Activated CD4-positive, alpha-beta memory T cell treated with anti-CD3 and anti-CD28 coated beads for 36 hours (primary cell): ENCODE measurements at regions of chr14 and their contacts with region 1.

Region 1: DNA sequence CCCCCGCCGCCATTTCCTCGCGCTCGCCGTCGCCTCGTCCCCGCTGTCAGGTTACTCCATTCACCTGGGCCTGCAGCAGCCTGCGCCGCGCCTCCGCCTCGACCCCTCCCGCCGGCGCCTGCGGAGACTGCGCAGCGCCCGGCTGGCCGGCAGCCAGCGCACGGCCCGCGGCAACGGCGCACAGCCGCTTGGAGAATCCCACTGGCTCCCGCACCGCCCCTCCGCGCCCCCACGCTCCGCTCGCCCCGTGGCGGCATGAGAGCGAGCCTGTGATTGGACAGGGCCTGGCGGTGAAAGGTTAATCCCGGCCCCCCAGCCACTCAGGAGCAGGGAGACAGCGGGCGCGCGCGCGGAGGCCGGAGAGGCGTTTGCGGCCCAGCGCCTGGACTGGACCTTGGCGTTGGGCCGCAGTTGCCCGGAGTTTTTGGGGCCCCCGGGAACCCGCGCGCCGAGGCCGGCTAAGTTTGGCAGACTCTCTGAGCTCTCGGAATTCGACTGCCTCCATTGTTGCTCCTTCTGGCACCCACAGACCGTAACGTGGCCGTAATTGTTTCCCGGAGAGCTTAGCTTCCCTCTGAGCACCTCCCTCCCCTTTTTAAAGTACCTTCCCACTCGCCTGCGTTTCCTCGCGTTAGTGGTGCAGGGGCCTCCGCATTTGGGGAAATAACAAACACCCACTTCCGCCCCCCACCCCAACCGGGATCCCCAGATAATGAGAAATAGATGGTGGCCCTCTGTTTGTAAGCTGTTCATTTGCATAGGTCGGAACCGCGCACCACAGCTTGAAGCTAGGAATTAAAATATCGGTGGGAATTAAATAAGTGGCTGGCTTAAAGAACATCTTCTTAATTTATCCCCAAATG is at the start of gene DICER1:
- DNase-seq: peak; percentile 95
- H3K4me3 Mint-ChIP-seq: peak within 1 kb of the TSS; percentile 96
- H3K27ac Mint-ChIP-seq: peak within 1 kb of the TSS; percentile 97
- H3K4me1 Mint-ChIP-seq: peaks cover 35% of the 10 kb centered on the region
- H3K27me3 Mint-ChIP-seq: no peaks in the 10 kb centered on the region
- total RNA-seq, gene DICER1: 39.9 to 40.9 TPM

Region 2: GRCh38 chr14:94282991-94283723 is 874.4 kb before region 1 on chr14:
- CTCF ChIA-PET with region 1: no interaction called
- POLR2A ChIA-PET with region 1: no interaction called
- intact Hi-C with region 1: no loop called
- DNase-seq: no peak
- H3K4me3 Mint-ChIP-seq: no peak overlapping the region
- H3K27ac Mint-ChIP-seq: no peak overlapping the region
- H3K4me1 Mint-ChIP-seq: peaks cover 12% of the 10 kb centered on the region
- H3K27me3 Mint-ChIP-seq: peaks cover 1% of the 10 kb centered on the region

Region 3: DNA sequence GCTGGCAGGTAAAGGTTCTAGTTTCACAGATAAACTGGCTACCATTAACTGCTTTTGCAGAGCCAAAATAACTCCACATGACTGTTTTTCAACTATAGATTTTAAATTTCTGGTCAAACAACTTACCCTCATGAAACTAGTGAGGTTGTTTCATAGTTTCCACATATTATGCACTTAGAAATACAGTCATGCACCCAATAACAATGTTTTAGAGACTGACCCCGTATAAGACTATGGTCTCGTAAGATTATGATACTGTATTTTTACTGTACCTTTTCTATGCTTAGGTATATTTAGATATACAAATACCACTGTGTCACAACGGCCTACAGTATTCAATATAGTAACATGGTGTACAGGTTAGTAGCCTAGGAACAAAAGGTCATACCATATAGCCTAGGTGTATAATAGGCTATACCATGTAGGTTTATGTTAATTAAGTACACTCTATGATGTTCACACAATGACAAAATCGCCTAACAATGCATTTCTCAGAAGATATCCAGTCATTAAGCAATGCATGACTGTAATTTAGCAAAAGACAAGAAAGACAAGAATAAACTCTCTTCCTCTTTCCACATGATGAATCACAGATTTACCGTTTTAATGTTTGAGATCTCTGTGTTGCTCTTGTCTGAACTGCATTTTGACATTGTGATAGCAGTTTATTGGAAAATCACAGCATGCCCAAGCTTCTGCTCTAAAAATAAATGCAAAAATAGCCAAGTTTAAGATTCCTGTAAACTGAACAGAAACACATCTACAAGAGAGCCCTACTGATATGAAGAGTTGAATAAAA is 17.3 kb before region 1 on chr14:
- CTCF ChIA-PET with region 1: interaction called, 3 read pairs
- POLR2A ChIA-PET with region 1: no interaction called
- intact Hi-C with region 1: loop called (anchors 2 kb)
- DNase-seq: no peak
- H3K4me3 Mint-ChIP-seq: no peak overlapping the region
- H3K27ac Mint-ChIP-seq: peak overlapping the region; percentile 54
- H3K4me1 Mint-ChIP-seq: peaks cover 73% of the 10 kb centered on the region
- H3K27me3 Mint-ChIP-seq: no peaks in the 10 kb centered on the region

Region 4: DNA sequence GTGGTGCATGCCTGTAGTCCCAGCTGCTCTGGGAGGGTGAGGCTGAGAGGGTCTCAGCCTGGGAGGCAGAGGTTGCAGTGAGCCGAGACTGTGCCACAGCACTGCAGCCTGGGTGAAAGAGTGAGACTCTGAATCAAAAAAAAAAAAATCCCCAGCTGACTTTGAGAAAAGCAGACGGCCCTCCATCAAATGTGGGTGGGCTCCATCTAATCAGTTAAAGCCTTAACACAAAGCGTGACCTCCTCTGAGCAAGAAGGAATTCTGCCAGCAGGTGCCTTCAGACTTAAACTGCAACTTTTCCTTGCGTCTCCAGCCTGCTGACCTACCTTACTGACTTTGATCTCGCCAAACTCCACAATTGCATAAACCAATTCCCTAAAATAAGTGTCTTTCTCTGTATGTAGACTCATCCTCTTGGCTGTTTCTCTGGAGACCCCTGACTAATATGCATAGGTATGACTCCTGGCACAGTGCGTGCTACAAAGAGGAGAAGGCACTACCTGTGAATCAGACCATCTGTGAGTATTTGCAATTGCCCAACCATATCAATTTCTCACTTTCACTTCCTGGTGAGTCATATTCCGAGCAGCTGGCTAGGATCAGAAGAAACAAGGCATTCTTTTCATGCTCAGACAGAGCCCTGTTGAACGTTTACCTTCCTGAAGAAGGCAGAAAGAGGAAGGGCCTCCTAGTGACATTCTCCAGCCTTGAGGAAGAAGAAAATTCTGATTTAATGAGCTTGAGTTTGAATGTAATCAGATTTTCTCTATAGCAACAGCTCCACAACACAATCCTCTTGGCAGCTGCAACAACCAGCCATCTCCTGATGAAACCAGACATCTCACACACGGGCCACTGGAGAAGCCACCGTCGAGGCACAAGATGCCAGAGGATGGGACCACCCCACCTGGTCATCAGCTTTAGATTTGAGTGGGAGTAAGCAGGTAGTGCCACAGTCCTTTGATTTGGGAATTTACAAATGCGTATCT is 107.8 kb after region 1 on chr14:
- CTCF ChIA-PET with region 1: no interaction called
- POLR2A ChIA-PET with region 1: no interaction called
- intact Hi-C with region 1: loop called (anchors 2 kb)
- DNase-seq: peak; percentile 72
- H3K4me3 Mint-ChIP-seq: no peak overlapping the region
- H3K27ac Mint-ChIP-seq: no peak overlapping the region
- H3K4me1 Mint-ChIP-seq: peaks cover 46% of the 10 kb centered on the region
- H3K27me3 Mint-ChIP-seq: peaks cover 1% of the 10 kb centered on the region

Region 5: DNA sequence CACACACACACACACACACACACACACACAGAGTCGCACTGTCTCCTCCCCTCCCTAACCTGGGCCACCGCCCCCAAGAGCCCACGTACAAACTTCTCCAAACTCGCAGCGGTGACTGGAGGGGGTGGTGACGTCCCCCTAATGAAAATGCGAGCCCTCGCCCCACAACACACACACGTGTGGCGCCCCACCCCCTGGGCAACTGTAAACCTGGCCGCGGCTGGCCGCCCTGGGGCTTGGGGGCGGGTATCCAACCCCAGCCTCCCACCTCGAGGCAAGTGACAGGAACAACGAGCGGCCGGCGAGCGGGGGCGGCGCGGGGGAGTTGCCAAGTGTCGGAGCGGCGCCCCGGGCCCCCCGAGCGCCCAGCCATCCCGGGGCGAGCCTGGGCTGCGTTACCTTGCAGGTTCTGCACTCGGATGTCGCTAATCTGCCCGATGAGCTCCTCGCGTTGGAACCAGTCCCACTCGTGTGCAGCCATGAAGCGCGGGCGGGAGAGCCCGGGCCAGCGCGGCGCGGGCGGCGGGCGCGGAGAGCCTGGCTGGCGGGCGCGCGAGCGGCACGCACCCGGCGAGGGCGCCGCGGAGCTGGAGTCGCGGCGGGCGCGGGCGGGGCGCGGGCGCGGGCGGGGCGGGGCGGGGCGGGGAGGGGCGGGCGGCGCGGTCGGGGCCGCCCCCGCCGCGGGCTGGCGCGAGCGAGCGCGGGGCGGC is 161.9 kb after region 1 on chr14 and contains the start of gene CLMN:
- CTCF ChIA-PET with region 1: no interaction called
- POLR2A ChIA-PET with region 1: no interaction called
- intact Hi-C with region 1: loop called (anchors 5 kb)
- DNase-seq: peak; percentile 27
- H3K4me3 Mint-ChIP-seq: peak within 1 kb of the TSS; percentile 55
- H3K27ac Mint-ChIP-seq: no peak within 1 kb of the TSS
- H3K4me1 Mint-ChIP-seq: peaks cover 15% of the 10 kb centered on the region
- H3K27me3 Mint-ChIP-seq: peaks cover 23% of the 10 kb centered on the region
- total RNA-seq, gene CLMN: 0.92 to 0.97 TPM

Region 6: GRCh38 chr14:95515596-95516552 is 358.3 kb after region 1 on chr14:
- CTCF ChIA-PET with region 1: no interaction called
- POLR2A ChIA-PET with region 1: no interaction called
- intact Hi-C with region 1: loop called (anchors 5 kb)
- DNase-seq: peak; percentile 91
- H3K4me3 Mint-ChIP-seq: peak overlapping the region; percentile 90
- H3K27ac Mint-ChIP-seq: peak overlapping the region; percentile 93
- H3K4me1 Mint-ChIP-seq: peaks cover 71% of the 10 kb centered on the region
- H3K27me3 Mint-ChIP-seq: no peaks in the 10 kb centered on the region

Region 7: DNA sequence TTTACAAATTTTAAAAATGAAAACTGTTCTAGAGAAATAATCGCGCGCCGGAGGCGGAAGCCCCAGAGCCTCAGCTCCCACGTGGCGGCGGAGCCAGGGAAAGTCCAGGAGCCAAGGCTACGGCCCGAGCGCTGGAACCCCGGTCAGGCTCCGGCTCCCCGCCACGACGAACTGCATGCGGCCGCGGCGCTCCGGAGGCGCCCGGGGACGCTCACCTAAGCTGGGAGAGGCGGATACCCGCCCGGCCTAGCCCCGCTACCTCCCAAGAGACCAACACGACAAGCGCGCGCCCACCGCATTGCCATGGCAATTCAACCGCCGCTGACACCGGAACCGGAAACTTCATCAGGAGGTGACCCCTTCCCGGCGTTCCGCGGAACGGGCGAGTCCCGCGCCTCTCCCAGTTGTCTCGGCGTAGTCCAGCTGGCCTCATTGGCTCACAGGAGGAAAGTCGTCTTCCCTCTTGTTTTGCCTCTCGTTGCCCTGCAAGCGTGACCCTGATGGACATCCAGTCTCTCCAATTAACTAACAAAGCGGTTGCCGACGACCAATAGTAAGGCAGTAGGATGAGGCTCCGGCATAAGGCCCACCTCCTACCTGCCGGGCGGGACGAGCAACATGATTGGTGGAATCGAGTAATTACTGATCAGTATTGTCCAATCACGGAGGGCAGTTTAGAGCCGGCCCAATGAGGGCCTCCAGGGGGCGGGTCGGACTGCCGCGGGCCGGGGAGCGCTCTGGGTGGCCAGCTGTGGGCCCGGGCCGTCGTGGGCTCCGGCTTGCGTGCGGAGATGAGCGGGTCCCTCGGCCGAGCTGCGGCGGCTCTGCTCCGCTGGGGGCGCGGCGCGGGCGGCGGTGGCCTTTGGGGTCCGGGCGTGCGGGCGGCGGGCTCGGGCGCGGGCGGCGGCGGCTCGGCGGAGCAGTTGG is 377.0 kb after region 1 on chr14 and contains the start of gene GLRX5:
- CTCF ChIA-PET with region 1: no interaction called
- POLR2A ChIA-PET with region 1: no interaction called
- intact Hi-C with region 1: loop called (anchors 1 kb)
- DNase-seq: peak; percentile 98
- H3K4me3 Mint-ChIP-seq: peak within 1 kb of the TSS; percentile 93
- H3K27ac Mint-ChIP-seq: peak within 1 kb of the TSS; percentile 93
- H3K4me1 Mint-ChIP-seq: peaks cover 52% of the 10 kb centered on the region
- H3K27me3 Mint-ChIP-seq: no peaks in the 10 kb centered on the region
- total RNA-seq, gene GLRX5: 31.8 to 32.2 TPM